Activated naive CD4-positive, alpha-beta T cell treated with anti-CD3 and anti-CD28 coated beads, Interleukin-2, amount 10 ng/mL, durations not matched to agents 7 days and 5 days (primary cell): ENCODE measurements at regions of chr9 and their contacts with region 1.

Region 1: GRCh38 chr9:21078717-21079116 is 975 bp upstream of the IFNB1 start:
- DNase-seq: no peak
- H3K4me3 Mint-ChIP-seq: no peak overlapping the region
- H3K27ac Mint-ChIP-seq: no peak overlapping the region
- H3K4me1 Mint-ChIP-seq: peaks cover 37% of the 10 kb centered on the region
- H3K27me3 Mint-ChIP-seq: peaks cover 14% of the 10 kb centered on the region

Region 2: DNA sequence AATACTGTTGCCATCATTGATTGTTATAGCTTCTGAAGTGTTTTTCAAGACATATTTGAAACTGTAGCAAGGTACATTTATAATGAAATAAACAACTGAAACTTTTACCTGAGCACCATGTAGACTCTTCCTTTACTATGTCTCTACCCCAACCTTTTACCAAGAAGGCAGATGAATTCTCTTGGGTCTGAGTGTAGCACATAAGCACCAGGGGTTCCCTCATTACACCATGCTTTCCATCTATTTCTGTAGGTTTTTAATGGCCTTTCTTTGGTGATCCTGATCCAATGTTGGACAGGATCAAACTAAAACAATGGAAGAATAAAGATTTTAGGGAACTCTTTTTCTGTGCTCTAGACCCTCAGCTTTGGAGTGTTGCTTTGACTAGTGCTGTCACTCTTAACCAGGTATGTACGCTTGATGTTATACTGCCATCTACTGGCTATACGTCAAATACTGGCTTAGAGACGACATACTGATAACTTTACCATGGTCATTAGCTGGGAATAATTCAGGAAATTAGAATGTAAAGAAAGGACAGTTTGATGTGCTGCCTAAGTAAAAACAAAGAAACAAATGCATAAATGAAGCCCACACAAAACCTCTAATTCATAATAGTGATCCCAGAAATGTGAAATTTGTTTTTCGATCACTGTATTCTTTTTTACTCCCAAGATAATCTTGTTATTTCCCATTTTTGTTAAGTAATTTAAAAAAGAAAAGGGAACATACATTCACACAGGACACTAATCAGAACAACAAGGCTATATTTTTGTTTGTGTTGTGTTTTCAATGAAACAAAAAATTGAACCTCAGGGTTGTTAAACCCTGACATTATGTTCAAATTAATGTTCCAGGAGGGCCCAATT is 32.2 kb after region 1 on chr9:
- CTCF ChIA-PET with region 1: interaction called, 54 read pairs
- DNase-seq: no peak
- H3K4me3 Mint-ChIP-seq: no peak overlapping the region
- H3K27ac Mint-ChIP-seq: no peak overlapping the region
- H3K4me1 Mint-ChIP-seq: no peaks in the 10 kb centered on the region
- H3K27me3 Mint-ChIP-seq: peaks cover 10% of the 10 kb centered on the region